Activated CD4-positive, alpha-beta memory T cell treated with anti-CD3 and anti-CD28 coated beads, Interleukin-2, amount 10 ng/mL, durations not matched to agents 7 days and 5 days (primary cell): ENCODE measurements at regions of chr3 and their contacts with region 1.

Region 1: DNA sequence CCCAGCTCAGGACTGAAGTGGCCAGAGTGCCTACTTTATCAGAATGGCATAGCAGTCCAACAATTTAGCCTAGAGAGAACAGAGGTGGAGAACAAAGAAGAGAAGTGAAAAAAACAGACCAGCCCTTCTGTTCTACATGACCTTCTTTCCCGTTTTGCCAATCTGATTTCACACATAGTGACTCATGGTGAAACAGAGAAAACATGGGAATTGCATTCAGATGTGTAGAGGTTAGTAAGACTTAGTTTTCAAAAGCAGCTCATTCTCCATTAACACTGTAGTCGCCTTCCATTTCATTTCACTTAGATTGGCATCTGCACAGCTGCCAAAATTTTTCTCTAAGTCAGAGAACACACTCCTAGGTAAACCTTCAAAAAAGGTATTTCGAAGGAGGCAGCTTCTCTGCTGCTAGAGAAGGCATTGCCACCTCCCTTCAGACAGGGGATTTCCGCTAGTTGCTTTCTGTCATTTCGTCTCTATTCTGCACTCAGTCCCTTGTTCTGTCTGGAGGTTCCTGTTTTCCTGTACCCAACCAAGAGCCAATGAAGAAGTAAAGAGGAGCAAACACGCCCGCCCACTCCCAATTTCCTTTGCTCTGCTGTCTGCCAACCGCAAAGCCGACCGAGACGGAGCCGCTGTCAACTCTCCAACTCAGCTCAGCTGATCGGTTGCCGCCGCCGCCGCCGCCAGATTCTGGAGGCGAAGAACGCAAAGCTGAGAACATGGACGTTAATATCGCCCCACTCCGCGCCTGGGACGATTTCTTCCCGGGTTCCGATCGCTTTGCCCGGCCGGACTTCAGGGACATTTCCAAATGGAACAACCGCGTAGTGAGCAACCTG is at the start of gene ARL6IP5:
- DNase-seq: peak; percentile 94
- H3K4me3 Mint-ChIP-seq: peak within 1 kb of the TSS; percentile 91
- H3K27ac Mint-ChIP-seq: peak within 1 kb of the TSS; percentile 98
- H3K4me1 Mint-ChIP-seq: peaks cover 61% of the 10 kb centered on the region
- H3K27me3 Mint-ChIP-seq: no peaks in the 10 kb centered on the region
- total RNA-seq, gene ARL6IP5: 179 to 182 TPM

Region 2: GRCh38 chr3:69051756-69052471 is 32.6 kb before region 1 on chr3 and contains the start of gene TMF1:
- CTCF ChIA-PET with region 1: interaction called, 17 read pairs
- POLR2A ChIA-PET with region 1: interaction called, 305 read pairs
- DNase-seq: peak; percentile 98
- H3K4me3 Mint-ChIP-seq: peak within 1 kb of the TSS; percentile 100
- H3K27ac Mint-ChIP-seq: peak within 1 kb of the TSS; percentile 96
- H3K4me1 Mint-ChIP-seq: peaks cover 54% of the 10 kb centered on the region
- H3K27me3 Mint-ChIP-seq: no peaks in the 10 kb centered on the region
- total RNA-seq, gene TMF1: 57.4 to 58.0 TPM

Region 3: GRCh38 chr3:69065318-69065964 is 19.1 kb before region 1 on chr3:
- CTCF ChIA-PET with region 1: interaction called, 17 read pairs
- POLR2A ChIA-PET with region 1: interaction called, 305 read pairs
- DNase-seq: peak; percentile 42
- H3K4me3 Mint-ChIP-seq: no peak overlapping the region
- H3K27ac Mint-ChIP-seq: peak overlapping the region; percentile 70
- H3K4me1 Mint-ChIP-seq: peaks cover 53% of the 10 kb centered on the region
- H3K27me3 Mint-ChIP-seq: no peaks in the 10 kb centered on the region

Region 4: DNA sequence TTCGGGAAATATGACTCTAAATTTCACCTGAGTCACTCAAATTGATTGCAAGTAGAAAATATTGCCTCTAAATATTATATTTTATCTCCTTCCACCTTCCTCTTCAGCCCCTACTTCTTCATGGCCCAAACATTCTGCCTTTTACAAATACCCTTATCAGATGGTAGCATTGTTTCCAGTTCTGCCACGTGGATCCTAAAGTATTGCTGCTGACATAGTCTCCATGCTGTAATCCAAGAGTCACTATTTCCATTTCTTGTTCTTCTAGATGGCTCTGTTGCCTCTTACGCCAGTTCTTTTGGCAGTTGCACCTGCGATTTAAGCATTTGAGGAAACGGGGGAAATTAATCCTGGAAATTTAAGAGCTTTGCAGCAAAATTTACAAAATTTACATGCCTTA is 24.3 kb after region 1 on chr3:
- CTCF ChIA-PET with region 1: interaction called, 4 read pairs
- POLR2A ChIA-PET with region 1: interaction called, 11 read pairs
- DNase-seq: no peak
- H3K4me3 Mint-ChIP-seq: no peak overlapping the region
- H3K27ac Mint-ChIP-seq: no peak overlapping the region
- H3K4me1 Mint-ChIP-seq: peaks cover 13% of the 10 kb centered on the region
- H3K27me3 Mint-ChIP-seq: no peaks in the 10 kb centered on the region

Region 5: GRCh38 chr3:69240651-69241568 is 156.4 kb after region 1 on chr3:
- CTCF ChIA-PET with region 1: no interaction called
- POLR2A ChIA-PET with region 1: no interaction called
- DNase-seq: no peak
- H3K4me3 Mint-ChIP-seq: no peak overlapping the region
- H3K27ac Mint-ChIP-seq: no peak overlapping the region
- H3K4me1 Mint-ChIP-seq: peaks cover 30% of the 10 kb centered on the region
- H3K27me3 Mint-ChIP-seq: no peaks in the 10 kb centered on the region